ENCODE measurements at regions of chr1 and their contacts with region 1.

Region 1: GRCh38 chr1:35947547-35947946 is 16.6 kb downstream of the AGO3 start:
- DNase-seq: no peak
- ATAC-seq: no peak
- H3K4me3 ChIP-seq: no peak overlapping the region
- H3K27ac ChIP-seq: no peak overlapping the region
- H3K4me1 ChIP-seq: 0 out of 2 replicates have a peak, but pooled peaks cover 3% of the 10 kb centered on the region
- H3K27me3 ChIP-seq: no peaks in the 10 kb centered on the region
- CTCF ChIP-seq: no peak
- EP300 ChIP-seq: no peak
- POLR2A ChIP-seq: no peak
- RAD21 ChIP-seq: no peak

Region 2: GRCh38 chr1:35876988-35877387 is 70.6 kb before region 1 on chr1:
- CTCF ChIA-PET with region 1: no interaction called
- POLR2A ChIA-PET with region 1: no interaction called
- RAD21 ChIA-PET with region 1: no interaction called
- SMC1A ChIA-PET with region 1: no interaction called
- in situ Hi-C with region 1: no loop called
- intact Hi-C with region 1: no loop called
- DNase-seq: no peak
- ATAC-seq: peak; percentile 58; the same call in 2 of the 3 replicates
- H3K4me3 ChIP-seq: no peak overlapping the region
- H3K27ac ChIP-seq: no peak overlapping the region
- H3K4me1 ChIP-seq: no peaks in the 10 kb centered on the region; the same call in 1 of the 2 replicates
- H3K27me3 ChIP-seq: no peaks in the 10 kb centered on the region
- CTCF ChIP-seq: no peak
- EP300 ChIP-seq: no peak
- POLR2A ChIP-seq: no peak
- RAD21 ChIP-seq: no peak

Region 3: GRCh38 chr1:35962952-35963351 is 15.4 kb after region 1 on chr1:
- CTCF ChIA-PET with region 1: no interaction called
- POLR2A ChIA-PET with region 1: no interaction called
- RAD21 ChIA-PET with region 1: no interaction called
- SMC1A ChIA-PET with region 1: no interaction called
- in situ Hi-C with region 1: no loop called
- intact Hi-C with region 1: loop called (anchors 1 kb)
- DNase-seq: no peak
- ATAC-seq: no peak
- H3K4me3 ChIP-seq: no peak overlapping the region
- H3K27ac ChIP-seq: no peak overlapping the region
- H3K4me1 ChIP-seq: no peaks in the 10 kb centered on the region
- H3K27me3 ChIP-seq: no peaks in the 10 kb centered on the region
- CTCF ChIP-seq: no peak
- EP300 ChIP-seq: no peak
- POLR2A ChIP-seq: no peak
- RAD21 ChIP-seq: no peak